CD14-positive monocyte (primary cell): ENCODE measurements at regions of chrX and their contacts with region 1.

Region 1: DNA sequence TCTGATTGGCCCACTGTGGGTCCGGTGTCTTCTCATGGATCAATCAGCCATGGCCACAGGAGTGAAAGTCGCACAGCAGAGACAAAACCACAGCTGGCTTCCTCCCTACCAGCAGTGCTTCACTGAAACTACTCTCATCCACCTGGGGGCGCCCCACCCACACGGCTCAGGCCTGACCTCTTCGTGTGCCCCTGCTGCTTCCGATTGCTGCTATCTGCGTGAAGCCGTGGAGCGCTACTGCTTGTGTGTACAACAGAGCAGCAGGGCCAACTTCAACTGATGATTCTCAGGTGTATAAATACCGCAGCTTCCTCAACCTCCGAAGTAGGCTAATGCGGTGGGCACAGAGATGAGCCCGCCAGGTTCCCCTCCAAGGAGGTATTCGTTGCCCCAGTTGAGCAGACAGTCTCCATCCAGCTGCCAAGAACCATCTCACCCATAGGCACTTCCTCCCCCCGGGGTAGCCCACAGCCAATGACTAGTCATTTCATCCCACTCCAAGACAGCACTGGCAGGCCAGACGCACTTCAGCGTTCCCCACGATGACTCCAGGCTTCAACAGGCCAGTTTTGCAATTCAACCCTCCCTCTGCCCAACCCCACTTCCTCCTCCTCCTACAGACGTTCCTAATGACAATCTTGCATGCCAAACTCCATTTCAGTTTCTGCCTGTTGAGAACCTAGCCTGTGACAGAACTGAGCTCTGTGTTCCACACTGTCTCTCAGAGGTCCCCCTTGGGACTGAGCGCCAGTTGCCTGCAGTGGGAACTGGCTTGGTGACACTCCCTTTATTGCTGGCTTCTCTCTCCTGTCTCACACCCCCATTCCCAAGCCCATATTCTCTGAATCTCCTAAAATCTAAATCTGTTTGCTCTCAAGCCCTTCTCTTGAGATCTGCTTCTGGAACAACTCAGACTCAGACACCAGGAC is 41.3 kb upstream of the ATP6AP2 start:
- DNase-seq: peak; percentile 80 to 87 (median 81)
- H3K4me3 ChIP-seq: peak overlapping the region in 2 of 3 experiments; percentile 17 to 43
- H3K4me3 Mint-ChIP-seq: peak overlapping the region; percentile 74 to 81
- H3K27ac ChIP-seq: peak overlapping the region; percentile 70 to 71
- H3K27ac Mint-ChIP-seq: peak overlapping the region; percentile 88 to 95 (median 91)
- H3K4me1 ChIP-seq: peaks cover 24% of the 10 kb centered on the region in 2 donors
- H3K4me1 Mint-ChIP-seq: peaks cover 27% of the 10 kb centered on the region
- H3K27me3 ChIP-seq: peaks cover 0 to 22% of the 10 kb centered on the region in 2 donors
- H3K27me3 Mint-ChIP-seq: peaks cover under 1 to 49% (median 1%) of the 10 kb centered on the region in 3 donors
- CTCF ChIP-seq: peak; percentile 36

Region 2: GRCh38 chrX:40580537-40581335 is 41.3 kb after region 1 on chrX and contains the start of gene ATP6AP2:
- intact Hi-C with region 1: loop called in 1 of 2 experiments (anchors 5 kb)
- DNase-seq: peak; percentile 92 to 95 (median 95)
- H3K4me3 ChIP-seq: peak within 1 kb of the TSS; percentile 63 to 82 (median 71)
- H3K4me3 Mint-ChIP-seq: peak within 1 kb of the TSS; percentile 80 to 86
- H3K27ac ChIP-seq: peak within 1 kb of the TSS; percentile 92 to 94
- H3K27ac Mint-ChIP-seq: peak within 1 kb of the TSS; percentile 92 to 98 (median 96)
- H3K4me1 ChIP-seq: peaks cover 56 to 64% of the 10 kb centered on the region in 2 donors
- H3K4me1 Mint-ChIP-seq: peaks cover 53% of the 10 kb centered on the region
- H3K27me3 ChIP-seq: peaks cover 0 to 31% of the 10 kb centered on the region in 2 donors
- H3K27me3 Mint-ChIP-seq: peaks cover 0 to 48% (median 0%) of the 10 kb centered on the region in 3 donors
- CTCF ChIP-seq: no peak
- polyA plus RNA-seq, gene ATP6AP2: 332 to 497 (median 430) TPM

Region 3: DNA sequence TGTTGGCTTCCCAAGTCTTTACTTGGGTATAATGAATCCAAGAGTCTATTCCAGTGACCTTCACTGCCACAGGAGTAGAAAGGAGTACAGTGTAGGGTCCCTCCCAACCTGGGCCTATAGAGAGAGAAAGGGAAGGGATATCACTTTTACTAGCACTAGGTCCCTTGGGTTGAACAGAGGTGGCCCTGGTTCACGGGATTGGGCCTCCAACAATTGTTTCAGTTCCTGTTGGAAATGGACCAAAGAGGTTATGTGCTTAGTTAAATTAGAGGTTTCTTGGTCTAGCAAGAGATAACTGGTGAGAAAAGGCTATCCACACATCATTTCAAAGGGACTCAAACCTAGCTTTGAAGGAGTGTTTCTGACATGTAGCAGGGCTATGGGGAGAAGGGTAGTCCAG is 253.0 kb after region 1 on chrX:
- intact Hi-C with region 1: loop called in 1 of 2 experiments (anchors 10 kb)
- DNase-seq: no peak
- H3K4me3 ChIP-seq: no peak overlapping the region
- H3K4me3 Mint-ChIP-seq: no peak overlapping the region
- H3K27ac ChIP-seq: no peak overlapping the region
- H3K27ac Mint-ChIP-seq: no peak overlapping the region
- H3K4me1 ChIP-seq: peaks cover 0 to 4% of the 10 kb centered on the region in 2 donors
- H3K4me1 Mint-ChIP-seq: peaks cover 8% of the 10 kb centered on the region
- H3K27me3 ChIP-seq: peaks cover 0 to 11% of the 10 kb centered on the region in 2 donors
- H3K27me3 Mint-ChIP-seq: peaks cover 2 to 35% (median 3%) of the 10 kb centered on the region in 3 donors
- CTCF ChIP-seq: no peak